ENCODE measurements at regions of chr14 and their contacts with region 1.

Region 1: GRCh38 chr14:77376771-77377501 is at the starts of genes SAMD15 and TMED8:
- DNase-seq: peak; percentile 82
- H3K4me3 ChIP-seq: peak within 1 kb of the TSS; percentile 79 to 90 (median 85)
- H3K27ac ChIP-seq: peak within 1 kb of the TSS; percentile 81
- H3K4me1 ChIP-seq: peaks cover 16% of the 10 kb centered on the region
- H3K27me3 ChIP-seq: no peaks in the 10 kb centered on the region
- CTCF ChIP-seq: peak in 1 of 2 donors; percentile 35
- total RNA-seq, gene SAMD15: 1.2 to 2.5 TPM
- total RNA-seq, gene TMED8: 11.2 to 16.0 TPM

Region 2: DNA sequence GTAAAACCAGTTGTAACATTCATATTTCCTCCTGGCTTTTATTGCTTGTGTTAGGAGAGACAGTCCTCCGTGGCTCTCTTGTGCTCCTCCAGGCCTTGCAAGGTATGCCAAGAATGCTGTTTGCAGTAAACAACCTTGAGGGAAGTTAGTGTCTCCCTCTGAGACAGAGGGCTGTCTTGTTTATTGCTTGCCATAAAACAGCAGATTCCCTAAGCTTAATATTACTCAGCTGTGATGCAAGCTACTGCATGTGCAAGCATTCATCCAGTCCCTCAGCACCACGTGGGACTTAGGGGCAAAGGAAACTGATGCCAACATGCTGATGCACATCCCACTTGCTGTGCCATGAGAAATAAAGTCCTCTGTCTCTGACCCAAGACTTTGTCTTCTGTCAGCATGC is 62.9 kb before region 1 on chr14:
- CTCF ChIA-PET with region 1: no interaction called
- dilution Hi-C with region 1: loop called (anchors 5 kb)
- in situ Hi-C with region 1: no loop called
- intact Hi-C with region 1: no loop called
- DNase-seq: peak; percentile 93
- H3K4me3 ChIP-seq: no peak overlapping the region
- H3K27ac ChIP-seq: peak overlapping the region; percentile 31
- H3K4me1 ChIP-seq: peaks cover 45% of the 10 kb centered on the region
- H3K27me3 ChIP-seq: no peaks in the 10 kb centered on the region
- CTCF ChIP-seq: no peak

Region 3: DNA sequence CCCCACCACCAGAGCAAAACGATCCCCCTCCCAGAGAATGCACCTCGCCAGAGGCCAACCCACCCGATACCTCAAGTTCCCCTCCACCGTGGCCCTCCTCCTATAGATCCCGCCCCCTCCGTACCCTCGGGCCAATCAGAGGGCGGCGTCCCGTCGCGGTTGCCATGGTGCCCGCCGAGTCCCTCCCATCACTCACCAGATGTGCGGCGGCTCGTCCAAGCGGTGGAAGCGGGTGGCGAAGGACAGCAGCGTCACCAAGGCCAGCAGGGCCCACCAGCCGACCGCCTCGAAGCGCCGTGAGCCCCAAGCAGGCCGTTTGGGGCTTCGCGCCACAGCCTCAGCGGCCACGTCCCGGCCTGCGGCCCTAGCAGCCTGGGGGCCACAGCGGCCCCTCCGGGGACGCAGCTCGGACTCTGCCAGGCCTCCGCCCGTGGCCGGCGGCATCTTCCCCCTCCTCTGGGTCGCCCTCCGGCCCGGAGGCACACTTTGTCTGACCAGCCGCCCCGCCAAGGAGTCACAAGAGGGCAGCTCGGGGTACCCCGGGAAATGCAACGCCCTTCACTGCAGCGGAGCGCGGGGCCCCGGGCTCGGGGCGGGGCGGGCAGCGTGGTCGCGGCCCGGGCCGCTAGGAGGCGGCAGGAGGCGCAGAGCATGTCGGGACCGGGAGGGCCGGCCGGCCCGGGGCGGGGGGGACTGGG is 56.5 kb before region 1 on chr14 and contains the start of gene POMT2:
- CTCF ChIA-PET with region 1: no interaction called
- dilution Hi-C with region 1: no loop called
- in situ Hi-C with region 1: no loop called
- intact Hi-C with region 1: loop called (anchors 5 kb)
- DNase-seq: peak; percentile 88
- H3K4me3 ChIP-seq: peak within 1 kb of the TSS; percentile 89 to 92 (median 90)
- H3K27ac ChIP-seq: peak within 1 kb of the TSS; percentile 87
- H3K4me1 ChIP-seq: peaks cover 38% of the 10 kb centered on the region
- H3K27me3 ChIP-seq: no peaks in the 10 kb centered on the region
- CTCF ChIP-seq: peak in 1 of 2 donors; percentile 34
- total RNA-seq, gene POMT2: 17.0 to 38.4 TPM

Region 4: DNA sequence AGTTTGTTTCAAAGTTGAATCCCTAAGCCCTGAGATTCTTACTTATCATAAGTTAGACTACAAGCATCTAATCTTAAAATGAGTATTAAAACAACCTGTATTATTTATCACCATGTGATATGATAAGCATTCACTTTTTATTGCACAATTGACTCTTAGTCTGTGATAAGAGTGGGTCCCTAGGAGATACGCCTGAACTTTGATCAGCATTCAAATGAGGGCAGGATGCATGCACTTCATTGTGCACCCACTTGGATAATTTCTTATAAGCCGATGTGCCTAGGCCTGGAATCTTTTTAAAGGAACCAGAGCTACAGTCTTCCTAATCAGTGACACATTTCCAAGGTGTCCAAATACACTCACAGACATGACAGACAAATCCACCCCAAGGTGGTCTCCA is 270.9 kb after region 1 on chr14:
- CTCF ChIA-PET with region 1: interaction called, 53 read pairs
- dilution Hi-C with region 1: no loop called
- in situ Hi-C with region 1: no loop called
- intact Hi-C with region 1: no loop called
- DNase-seq: no peak
- H3K4me3 ChIP-seq: no peak overlapping the region
- H3K27ac ChIP-seq: no peak overlapping the region
- H3K4me1 ChIP-seq: no peaks in the 10 kb centered on the region
- H3K27me3 ChIP-seq: no peaks in the 10 kb centered on the region
- CTCF ChIP-seq: no peak